ENCODE measurements at regions of chr6 and their contacts with region 1.

Region 1: GRCh38 chr6:24855395-24856245 is 56.9 kb upstream of the ARMH2 start:
- DNase-seq: peak in 1 of 2 donors; percentile 79
- H3K4me3 ChIP-seq: peak overlapping the region in 1 of 2 donors; percentile 30
- H3K27ac ChIP-seq: peak overlapping the region; percentile 47 to 63
- H3K4me1 ChIP-seq: peaks cover 0 to 8% of the 10 kb centered on the region in 2 donors
- H3K27me3 ChIP-seq: no peaks in the 10 kb centered on the region
- CTCF ChIP-seq: peak; percentile 69 to 86 (median 83)

Region 2: DNA sequence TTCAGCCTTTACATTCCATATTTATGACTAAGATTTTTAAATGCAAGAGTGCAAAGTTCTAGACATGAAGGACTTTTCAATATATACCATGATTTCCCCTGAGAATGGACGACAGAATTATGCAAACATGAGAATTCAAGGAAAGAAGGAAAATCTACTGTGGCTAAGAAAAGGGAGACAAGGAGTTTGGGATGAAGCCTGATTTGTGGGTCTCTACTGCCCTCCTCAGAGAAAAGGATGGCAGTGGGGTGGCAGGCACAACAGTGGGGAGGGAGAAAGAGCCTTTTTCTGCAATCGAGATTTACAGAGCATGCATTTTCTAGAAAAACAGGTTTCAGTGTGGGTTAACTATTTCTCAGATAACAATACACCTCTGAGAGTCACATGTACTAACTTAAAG is 1196.5 kb before region 1 on chr6:
- intact Hi-C with region 1: no loop called
- DNase-seq: no peak
- H3K4me3 ChIP-seq: no peak overlapping the region
- H3K27ac ChIP-seq: no peak overlapping the region
- H3K4me1 ChIP-seq: no peaks in the 10 kb centered on the region
- H3K27me3 ChIP-seq: no peaks in the 10 kb centered on the region
- CTCF ChIP-seq: peak in 1 of 3 experiments; percentile 18

Region 3: DNA sequence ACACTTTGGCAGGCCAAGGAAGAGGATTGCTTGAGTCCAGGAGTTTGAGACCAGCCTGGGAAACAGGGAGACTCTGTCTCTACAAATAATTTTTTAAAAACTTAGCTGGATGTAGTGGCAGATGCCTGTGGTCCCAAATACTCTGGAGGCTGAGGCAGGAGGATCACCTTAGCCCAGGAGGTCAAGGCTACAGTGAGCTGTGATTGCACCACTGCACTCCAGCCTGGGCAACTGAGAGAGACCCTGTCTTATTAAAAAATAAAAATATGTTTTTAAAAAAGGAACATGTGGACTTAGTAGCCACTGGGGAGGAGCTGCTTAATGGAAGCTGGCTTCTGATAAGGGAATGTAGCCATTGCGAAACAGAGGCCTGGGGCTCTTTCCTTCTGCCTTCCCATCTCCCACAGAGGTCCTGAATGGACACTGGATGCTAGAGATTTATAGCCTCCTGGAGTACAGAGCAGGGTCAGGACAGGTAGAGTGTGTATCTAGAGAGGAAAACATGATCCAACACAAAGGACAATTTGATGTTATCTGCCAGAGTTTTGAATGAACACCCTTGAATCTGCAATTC is 102.6 kb before region 1 on chr6:
- intact Hi-C with region 1: no loop called
- DNase-seq: no peak
- H3K4me3 ChIP-seq: no peak overlapping the region
- H3K27ac ChIP-seq: no peak overlapping the region
- H3K4me1 ChIP-seq: no peaks in the 10 kb centered on the region
- H3K27me3 ChIP-seq: no peaks in the 10 kb centered on the region
- CTCF ChIP-seq: no peak

Region 4: DNA sequence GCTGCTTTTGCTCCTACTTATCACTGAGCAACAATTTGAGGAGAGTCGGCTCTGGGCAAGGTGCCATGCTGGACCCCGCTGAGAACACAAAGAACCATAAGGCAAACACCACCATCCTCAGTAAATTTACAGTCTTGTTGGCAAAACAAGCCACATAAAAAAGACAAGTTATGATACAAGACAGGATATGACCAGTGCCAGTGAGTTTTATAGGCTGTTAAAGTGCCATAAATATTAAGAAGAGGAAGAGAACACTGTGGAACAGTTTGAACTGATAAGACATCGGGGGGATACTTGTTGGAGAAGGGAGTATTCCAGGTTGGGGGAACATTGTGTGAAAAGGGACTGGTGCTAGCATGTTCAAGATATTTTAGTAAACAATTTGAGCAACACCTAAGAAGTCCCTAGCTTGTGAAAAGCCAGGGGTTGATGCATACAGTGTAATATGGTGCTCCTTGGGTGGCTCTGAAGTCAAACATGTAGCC is 105.4 kb after region 1 on chr6:
- intact Hi-C with region 1: no loop called
- DNase-seq: no peak
- H3K4me3 ChIP-seq: no peak overlapping the region
- H3K27ac ChIP-seq: no peak overlapping the region
- H3K4me1 ChIP-seq: no peaks in the 10 kb centered on the region
- H3K27me3 ChIP-seq: no peaks in the 10 kb centered on the region
- CTCF ChIP-seq: no peak

Region 5: GRCh38 chr6:24991810-24992467 is 136.3 kb after region 1 on chr6:
- intact Hi-C with region 1: loop called (anchors 5 kb)
- DNase-seq: no peak
- H3K4me3 ChIP-seq: no peak overlapping the region
- H3K27ac ChIP-seq: no peak overlapping the region
- H3K4me1 ChIP-seq: no peaks in the 10 kb centered on the region
- H3K27me3 ChIP-seq: no peaks in the 10 kb centered on the region
- CTCF ChIP-seq: peak; percentile 50 to 60 (median 59)

Region 6: GRCh38 chr6:25070547-25071366 is 215.1 kb after region 1 on chr6:
- intact Hi-C with region 1: loop called (anchors 2 kb)
- DNase-seq: peak in 1 of 2 donors; percentile 91
- H3K4me3 ChIP-seq: no peak overlapping the region
- H3K27ac ChIP-seq: no peak overlapping the region
- H3K4me1 ChIP-seq: no peaks in the 10 kb centered on the region
- H3K27me3 ChIP-seq: no peaks in the 10 kb centered on the region
- CTCF ChIP-seq: peak; percentile 71 to 91 (median 85)

Measured in ascending aorta (tissue), 2 donors.